ENCODE measurements at regions of chr4 and their contacts with region 1.

Region 1: GRCh38 chr4:14100349-14100748 is 472.8 kb upstream of the BOD1L1 start:
- DNase-seq: no peak
- ATAC-seq: no peak
- H3K4me3 Mint-ChIP-seq: no peak overlapping the region
- H3K27ac Mint-ChIP-seq: no peak overlapping the region
- H3K4me1 Mint-ChIP-seq: no peaks in the 10 kb centered on the region
- H3K27me3 Mint-ChIP-seq: peaks cover 3% of the 10 kb centered on the region

Region 2: GRCh38 chr4:13888112-13888511 is 212.2 kb before region 1 on chr4:
- CTCF ChIA-PET with region 1: no interaction called
- POLR2A ChIA-PET with region 1: no interaction called
- intact Hi-C with region 1: no loop called
- DNase-seq: no peak
- ATAC-seq: no peak
- H3K4me3 Mint-ChIP-seq: no peak overlapping the region
- H3K27ac Mint-ChIP-seq: no peak overlapping the region
- H3K4me1 Mint-ChIP-seq: peaks cover 20% of the 10 kb centered on the region
- H3K27me3 Mint-ChIP-seq: peaks cover 6% of the 10 kb centered on the region

Region 3: DNA sequence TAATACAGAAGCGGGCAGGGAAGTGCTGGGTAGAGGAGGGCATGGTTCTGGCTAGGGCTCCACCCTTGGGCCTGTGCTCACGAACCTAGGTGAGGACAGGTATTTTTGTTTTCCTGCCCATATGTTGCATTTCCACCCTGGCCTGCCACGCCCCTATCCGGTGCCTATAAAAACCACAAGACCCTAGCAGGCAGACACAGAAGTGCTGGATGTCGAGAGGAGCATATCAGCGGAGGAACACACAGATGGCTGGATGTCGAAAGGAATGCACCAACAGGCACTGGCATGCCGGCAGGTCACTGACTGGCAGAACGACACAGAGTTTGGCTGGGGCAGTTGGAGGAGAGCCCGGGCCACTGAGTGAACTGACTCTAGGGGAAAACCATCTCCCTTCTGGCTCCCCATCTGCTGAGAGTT is 156.2 kb before region 1 on chr4:
- CTCF ChIA-PET with region 1: no interaction called
- POLR2A ChIA-PET with region 1: no interaction called
- intact Hi-C with region 1: loop called in 1 of 2 experiments (anchors 10 kb)
- DNase-seq: no peak
- ATAC-seq: no peak
- H3K4me3 Mint-ChIP-seq: no peak overlapping the region
- H3K27ac Mint-ChIP-seq: no peak overlapping the region
- H3K4me1 Mint-ChIP-seq: no peaks in the 10 kb centered on the region
- H3K27me3 Mint-ChIP-seq: no peaks in the 10 kb centered on the region